Mucosa of descending colon (tissue), 3 donors: ENCODE measurements at regions of chr12 and their contacts with region 1.

Region 1: DNA sequence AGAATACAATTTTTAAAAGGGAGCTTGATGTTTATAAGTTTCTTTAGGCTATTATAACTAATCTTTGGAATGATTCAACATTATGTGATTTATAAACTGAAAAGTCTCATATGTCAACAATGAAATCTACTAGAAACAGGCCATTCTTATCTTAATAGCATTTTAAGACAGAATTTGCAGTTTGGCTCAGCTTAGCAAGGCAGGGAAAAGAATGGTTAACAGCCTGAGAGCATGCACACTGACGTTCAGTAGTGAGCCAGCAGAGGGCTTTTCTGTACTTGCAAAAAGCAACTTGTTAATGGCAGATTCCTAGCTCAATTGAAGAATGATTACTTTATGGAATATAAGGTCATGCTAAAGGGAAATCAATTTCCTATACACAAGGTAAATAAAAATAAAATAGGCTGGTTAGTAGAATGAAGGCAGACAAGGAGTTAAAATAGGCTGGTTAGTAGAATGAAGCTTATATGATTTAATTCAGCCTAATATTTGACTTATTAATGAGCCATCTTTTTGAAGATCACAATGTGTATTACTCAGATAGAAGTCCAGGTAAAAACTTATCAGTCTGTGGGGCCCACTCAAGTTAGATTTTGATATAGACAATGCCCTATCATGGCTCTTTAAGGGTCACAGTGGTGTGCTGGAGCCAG is 95.9 kb downstream of the OTOGL start:
- DNase-seq: peak in 1 of 3 donors; percentile 24
- ATAC-seq: no peak
- H3K4me3 ChIP-seq: no peak overlapping the region
- H3K4me1 ChIP-seq: no peaks in the 10 kb centered on the region
- CTCF ChIP-seq: no peak

Region 2: GRCh38 chr12:79973801-79974200 is 221.4 kb before region 1 on chr12:
- intact Hi-C with region 1: no loop called
- DNase-seq: no peak
- ATAC-seq: no peak
- H3K4me3 ChIP-seq: no peak overlapping the region
- H3K4me1 ChIP-seq: no peaks in the 10 kb centered on the region
- CTCF ChIP-seq: no peak

Region 3: GRCh38 chr12:80087486-80088213 is 107.5 kb before region 1 on chr12:
- intact Hi-C with region 1: no loop called
- DNase-seq: no peak
- ATAC-seq: no peak
- H3K4me3 ChIP-seq: no peak overlapping the region
- H3K4me1 ChIP-seq: no peaks in the 10 kb centered on the region
- CTCF ChIP-seq: no peak

Region 4: DNA sequence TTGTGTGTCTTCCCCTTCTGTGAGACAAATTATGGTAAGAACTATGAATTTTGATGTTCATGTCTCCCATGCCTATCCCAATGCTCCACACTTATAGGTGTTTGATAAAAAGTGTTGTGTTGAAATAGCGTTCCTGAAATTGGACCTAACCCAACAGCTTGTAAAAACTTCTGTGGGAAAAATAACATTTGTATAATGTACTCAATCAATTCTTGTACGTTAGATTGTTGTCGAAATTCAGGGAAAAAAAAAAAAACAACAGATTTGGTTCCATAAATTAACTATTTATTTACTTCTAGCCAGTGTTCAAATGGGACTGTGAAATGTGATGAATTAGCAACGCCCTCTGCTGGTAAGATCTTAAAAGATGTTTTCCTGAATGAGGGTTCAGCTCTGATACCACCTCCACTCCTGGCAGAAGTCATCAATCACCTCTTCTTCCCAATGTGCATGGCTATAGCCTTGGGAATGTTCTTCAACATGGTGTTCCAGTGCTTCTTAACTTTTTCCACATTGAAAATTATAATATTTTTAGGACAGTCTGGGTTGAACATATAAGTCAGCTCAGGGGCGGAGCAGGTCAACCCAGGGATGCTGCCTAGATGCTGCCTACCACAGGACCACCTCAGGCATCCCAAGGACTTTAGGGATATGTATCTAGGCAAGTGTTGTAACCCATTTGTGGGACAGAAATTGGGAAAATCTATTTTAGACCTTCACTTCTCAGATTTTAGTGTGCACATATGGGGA is 74.8 kb after region 1 on chr12:
- intact Hi-C with region 1: loop called (anchors 5 kb)
- DNase-seq: peak in 1 of 3 donors; percentile 11
- ATAC-seq: peak; percentile 44
- H3K4me3 ChIP-seq: no peak overlapping the region
- H3K4me1 ChIP-seq: no peaks in the 10 kb centered on the region
- CTCF ChIP-seq: no peak

Region 5: GRCh38 chr12:80422550-80422949 is 227.3 kb after region 1 on chr12:
- intact Hi-C with region 1: no loop called
- DNase-seq: no peak
- ATAC-seq: no peak
- H3K4me3 ChIP-seq: no peak overlapping the region
- H3K4me1 ChIP-seq: no peaks in the 10 kb centered on the region
- CTCF ChIP-seq: no peak

Region 6: GRCh38 chr12:80632835-80633234 is 437.6 kb after region 1 on chr12:
- intact Hi-C with region 1: no loop called
- DNase-seq: no peak
- ATAC-seq: no peak
- H3K4me3 ChIP-seq: no peak overlapping the region
- H3K4me1 ChIP-seq: no peaks in the 10 kb centered on the region
- CTCF ChIP-seq: no peak